ENCODE measurements at regions of chr14 and their contacts with region 1.

Region 1: DNA sequence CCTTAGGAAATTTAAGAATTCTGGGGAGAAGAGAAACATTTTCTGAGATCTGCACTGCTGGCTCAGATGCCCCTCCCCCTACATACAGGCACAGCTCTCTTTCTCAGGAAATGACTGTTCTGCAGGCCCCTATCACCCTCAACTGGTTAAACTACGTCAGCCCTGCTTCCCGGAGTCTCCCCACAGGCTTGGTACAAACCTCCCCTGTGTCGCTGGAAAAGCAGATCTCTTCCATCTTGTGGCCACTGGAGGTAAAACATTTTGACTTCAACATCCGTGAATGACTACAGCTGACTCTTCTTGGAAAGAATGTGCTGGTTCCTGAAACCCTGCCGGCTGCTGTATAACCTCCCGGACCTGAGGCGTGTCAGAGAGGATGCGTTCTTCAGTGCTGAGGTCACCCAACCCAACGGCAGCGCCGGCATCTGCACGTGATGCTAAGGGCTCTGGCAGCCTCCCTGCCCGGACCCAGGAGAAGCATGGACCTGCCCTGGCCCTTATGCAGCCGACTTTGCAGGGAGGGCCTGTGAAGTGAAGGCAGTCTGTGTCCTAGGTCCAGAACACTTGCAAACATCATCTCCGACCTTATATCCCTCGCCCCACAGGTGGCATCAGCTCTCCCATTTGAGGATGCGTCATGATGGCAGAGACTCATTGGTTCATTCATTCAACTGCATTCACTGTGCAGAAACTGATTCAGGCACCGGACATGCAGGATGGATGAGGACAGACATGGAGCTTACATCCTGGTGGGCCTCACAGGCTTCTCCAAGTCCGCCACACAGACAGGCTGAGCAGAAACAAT is 129.3 kb downstream of the GCH1 start:
- DNase-seq: peak; percentile 74
- CTCF ChIP-seq: peak; percentile 41

Region 2: GRCh38 chr14:54488646-54489317 is 284.6 kb before region 1 on chr14 and contains the start of gene GMFB:
- CTCF ChIA-PET with region 1: interaction called, 16 read pairs
- POLR2A ChIA-PET with region 1: no interaction called
- DNase-seq: peak; percentile 93
- CTCF ChIP-seq: peak; percentile 25

Region 3: DNA sequence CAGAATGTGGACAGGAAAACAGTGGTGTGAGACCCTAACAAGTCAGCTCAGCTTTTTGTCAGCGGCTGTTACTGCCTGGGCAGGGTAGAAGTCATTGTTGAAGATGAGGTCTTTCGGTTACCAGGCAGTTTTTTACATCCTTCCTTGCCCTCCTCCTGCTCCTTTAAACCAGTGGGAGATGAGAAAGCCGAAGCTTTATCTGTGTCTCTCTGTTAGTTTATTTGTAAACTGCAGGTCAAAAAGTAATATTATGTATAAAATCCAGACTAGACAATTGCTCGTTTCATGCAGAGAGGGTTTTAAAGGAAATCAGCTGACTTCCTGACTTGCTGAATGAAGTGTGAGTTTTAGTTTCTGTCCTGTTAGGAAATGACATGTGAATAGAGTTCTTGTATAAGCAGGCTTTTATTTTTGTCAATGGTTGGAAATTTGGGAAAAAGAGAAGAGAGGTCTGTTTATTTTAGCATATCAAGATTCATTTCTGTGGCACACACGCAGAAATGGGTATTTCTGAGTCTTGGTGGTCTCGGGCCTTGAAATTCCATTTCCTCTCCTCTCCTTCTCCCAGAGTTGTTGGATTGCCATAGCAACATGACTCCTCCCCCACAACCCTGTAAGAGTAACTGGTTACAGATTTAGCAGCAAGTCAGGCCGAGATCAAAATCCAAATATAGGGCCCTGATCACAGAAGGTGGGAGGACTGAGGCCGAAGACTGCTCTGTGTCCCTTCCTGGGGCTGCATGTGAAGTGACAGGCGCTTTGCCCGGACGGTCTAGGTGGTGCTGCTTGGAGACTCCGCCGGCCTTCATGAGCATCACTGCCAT is 145.6 kb before region 1 on chr14:
- CTCF ChIA-PET with region 1: interaction called, 10 read pairs
- POLR2A ChIA-PET with region 1: no interaction called
- DNase-seq: peak; percentile 59
- CTCF ChIP-seq: no peak

Region 4: DNA sequence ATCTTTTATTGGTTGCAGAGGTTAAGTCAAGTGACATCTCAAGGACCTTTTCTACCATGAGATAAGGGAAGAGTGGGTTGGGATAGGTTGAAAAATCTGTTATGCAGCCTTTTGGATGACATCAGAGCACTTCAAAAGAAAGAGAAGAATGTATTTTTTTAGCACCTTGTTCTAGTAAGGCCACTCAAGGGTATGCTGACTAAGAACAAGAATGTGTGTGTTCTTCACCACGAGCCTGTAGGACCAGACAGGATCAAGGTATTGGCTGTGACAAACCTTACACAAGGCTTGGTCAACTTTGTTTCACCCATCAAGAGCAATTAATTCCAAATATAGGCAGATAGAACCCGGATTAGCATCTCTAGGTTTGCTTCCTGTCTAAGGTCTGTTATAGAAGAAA is 63.9 kb before region 1 on chr14:
- CTCF ChIA-PET with region 1: interaction called, 16 read pairs
- POLR2A ChIA-PET with region 1: no interaction called
- DNase-seq: peak; percentile 53
- CTCF ChIP-seq: no peak

Region 5: DNA sequence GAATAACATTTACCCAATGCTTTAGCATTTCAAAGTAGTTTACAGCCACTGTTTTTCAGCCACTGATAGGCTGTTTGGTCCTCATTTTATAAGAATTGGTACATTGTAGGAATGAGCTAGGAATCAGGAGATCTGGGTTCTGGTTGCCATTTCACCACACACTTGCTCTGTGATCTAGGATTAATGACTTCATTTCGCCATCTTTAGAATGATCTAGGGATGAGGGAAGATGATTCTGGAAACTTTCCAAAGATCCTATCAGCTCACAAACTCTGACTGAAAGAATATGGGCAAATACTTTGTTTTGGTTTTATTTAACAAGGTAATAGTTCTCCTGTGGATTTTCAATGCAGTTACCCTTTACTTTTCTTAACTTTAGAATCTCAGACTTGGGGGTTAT is 25.8 kb before region 1 on chr14:
- CTCF ChIA-PET with region 1: interaction called, 14 read pairs
- POLR2A ChIA-PET with region 1: no interaction called
- DNase-seq: no peak
- CTCF ChIP-seq: no peak

Region 6: GRCh38 chr14:54796961-54797360 is 23.6 kb after region 1 on chr14:
- CTCF ChIA-PET with region 1: interaction called, 39 read pairs
- POLR2A ChIA-PET with region 1: no interaction called
- DNase-seq: no peak
- CTCF ChIP-seq: no peak

Region 7: GRCh38 chr14:54840798-54841197 is 67.4 kb after region 1 on chr14:
- CTCF ChIA-PET with region 1: no interaction called
- POLR2A ChIA-PET with region 1: no interaction called
- DNase-seq: no peak
- CTCF ChIP-seq: peak; percentile 2